HepG2 (cell line): ENCODE measurements at regions of chr17 and their contacts with region 1.

Region 1: DNA sequence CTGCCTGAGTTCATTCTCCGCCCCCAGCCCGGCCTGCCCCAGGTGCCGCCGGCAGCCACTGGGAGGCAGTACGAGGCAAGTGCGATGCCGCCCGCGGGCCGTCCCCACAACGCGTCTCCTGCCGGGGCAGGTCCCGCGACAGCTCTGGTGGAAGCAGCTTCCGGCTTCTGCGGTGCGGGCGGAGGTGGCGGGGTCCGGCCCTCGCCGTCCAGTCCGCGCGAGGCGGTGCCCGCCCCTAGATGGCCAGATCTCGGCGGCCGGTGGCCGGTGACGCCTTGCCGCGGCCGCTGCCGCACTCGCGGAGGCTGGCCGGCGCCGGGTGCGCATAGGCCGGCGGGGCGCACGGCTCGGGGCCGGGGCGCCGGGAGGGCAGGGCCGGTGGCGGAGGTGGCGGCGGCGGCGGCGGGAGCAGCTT is 1.8 kb downstream of the GJD3 start:
- DNase-seq: peak; percentile 85
- ATAC-seq: peak; percentile 89
- H3K4me3 ChIP-seq: peak overlapping the region; percentile 45 to 67 (median 60); a peak in 5 of 6 replicates
- H3K27ac ChIP-seq: no peak overlapping the region
- H3K4me1 ChIP-seq: peaks cover 41% of the 10 kb centered on the region
- H3K27me3 ChIP-seq: peaks cover 0 to 11% of the 10 kb centered on the region in 2 experiments; a peak in 2 of 5 replicates
- CTCF ChIP-seq: peak; percentile 97
- EP300 ChIP-seq: 0 out of 4 replicates have a peak, but pooled peaks of 1 of the 2 experiments have one; percentile 9
- POLR2A ChIP-seq: peak; percentile 48 to 67; a peak in 3 of 4 replicates
- RAD21 ChIP-seq: peak; percentile 90

Region 2: DNA sequence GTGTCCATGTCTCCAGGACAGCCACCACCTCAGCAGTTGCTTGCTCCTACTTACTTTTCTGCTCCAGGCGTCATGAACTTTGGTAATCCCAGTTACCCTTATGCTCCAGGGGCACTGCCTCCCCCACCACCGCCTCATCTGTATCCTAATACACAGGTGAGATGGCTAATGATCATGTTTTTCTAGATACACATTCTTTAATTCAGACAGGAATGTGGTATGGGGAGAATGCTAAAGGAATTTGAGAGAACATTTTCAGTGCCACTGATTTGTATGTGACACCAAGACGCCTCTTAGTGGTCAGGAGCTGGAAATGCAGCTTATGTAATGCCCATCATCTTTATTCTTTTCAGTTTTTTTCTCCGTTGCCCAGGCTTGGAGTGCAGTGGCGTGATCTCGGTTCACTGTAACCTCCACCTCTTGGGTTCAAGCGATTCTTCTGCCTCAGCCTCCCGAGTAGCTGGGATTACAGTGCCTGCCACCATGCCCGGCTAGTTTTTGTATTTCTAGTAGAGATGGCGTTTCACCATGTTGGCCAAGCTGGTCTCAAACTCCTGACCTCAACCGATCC is 194.4 kb before region 1 on chr17:
- CTCF ChIA-PET with region 1: no interaction called
- POLR2A ChIA-PET with region 1: no interaction called
- in situ Hi-C with region 1: no loop called
- intact Hi-C with region 1: no loop called
- DNase-seq: peak; percentile 77
- ATAC-seq: peak; percentile 69
- H3K4me3 ChIP-seq: no peak overlapping the region
- H3K27ac ChIP-seq: peak overlapping the region; percentile 16
- H3K4me1 ChIP-seq: peaks cover 26% of the 10 kb centered on the region
- H3K27me3 ChIP-seq: no peaks in the 10 kb centered on the region
- CTCF ChIP-seq: peak; percentile 89
- EP300 ChIP-seq: no peak
- POLR2A ChIP-seq: no peak
- RAD21 ChIP-seq: peak; percentile 82; the same call in 1 of the 2 replicates

Region 3: GRCh38 chr17:40209404-40210093 is 153.2 kb before region 1 on chr17:
- CTCF ChIA-PET with region 1: no interaction called
- POLR2A ChIA-PET with region 1: interaction called, 3 read pairs
- in situ Hi-C with region 1: loop called (anchors 10 kb)
- intact Hi-C with region 1: loop called (anchors 5 kb)
- DNase-seq: no peak
- ATAC-seq: peak; percentile 36
- H3K4me3 ChIP-seq: no peak overlapping the region
- H3K27ac ChIP-seq: no peak overlapping the region
- H3K4me1 ChIP-seq: peaks cover 57% of the 10 kb centered on the region
- H3K27me3 ChIP-seq: no peaks in the 10 kb centered on the region
- CTCF ChIP-seq: no peak
- EP300 ChIP-seq: no peak
- POLR2A ChIP-seq: no peak
- RAD21 ChIP-seq: no peak

Region 4: GRCh38 chr17:40293363-40293762 is 69.3 kb before region 1 on chr17:
- CTCF ChIA-PET with region 1: no interaction called
- POLR2A ChIA-PET with region 1: no interaction called
- in situ Hi-C with region 1: no loop called
- intact Hi-C with region 1: no loop called
- DNase-seq: no peak
- ATAC-seq: no peak
- H3K4me3 ChIP-seq: no peak overlapping the region
- H3K27ac ChIP-seq: no peak overlapping the region
- H3K4me1 ChIP-seq: peaks cover 35% of the 10 kb centered on the region
- H3K27me3 ChIP-seq: no peaks in the 10 kb centered on the region
- CTCF ChIP-seq: no peak
- EP300 ChIP-seq: no peak
- POLR2A ChIP-seq: no peak
- RAD21 ChIP-seq: no peak

Region 5: GRCh38 chr17:40349920-40350909 is 12.5 kb before region 1 on chr17:
- CTCF ChIA-PET with region 1: no interaction called
- POLR2A ChIA-PET with region 1: interaction called, 10 read pairs
- in situ Hi-C with region 1: no loop called
- intact Hi-C with region 1: no loop called
- DNase-seq: no peak
- ATAC-seq: no peak
- H3K4me3 ChIP-seq: no peak overlapping the region
- H3K27ac ChIP-seq: no peak overlapping the region
- H3K4me1 ChIP-seq: peaks cover 73% of the 10 kb centered on the region
- H3K27me3 ChIP-seq: no peaks in the 10 kb centered on the region
- CTCF ChIP-seq: no peak
- EP300 ChIP-seq: no peak
- POLR2A ChIP-seq: no peak
- RAD21 ChIP-seq: no peak

Region 6: GRCh38 chr17:40450175-40450574 is 87.5 kb after region 1 on chr17:
- CTCF ChIA-PET with region 1: interaction called, 3 read pairs
- POLR2A ChIA-PET with region 1: interaction called, 3 read pairs
- in situ Hi-C with region 1: no loop called
- intact Hi-C with region 1: loop called (anchors 1 kb)
- DNase-seq: peak; percentile 54
- ATAC-seq: no peak
- H3K4me3 ChIP-seq: no peak overlapping the region
- H3K27ac ChIP-seq: no peak overlapping the region
- H3K4me1 ChIP-seq: peaks cover 51% of the 10 kb centered on the region
- H3K27me3 ChIP-seq: no peaks in the 10 kb centered on the region
- CTCF ChIP-seq: peak; percentile 72
- EP300 ChIP-seq: no peak
- POLR2A ChIP-seq: no peak
- RAD21 ChIP-seq: peak; percentile 30; the same call in 1 of the 2 replicates